ENCODE measurements at regions of chrX and their contacts with region 1.

Region 1: GRCh38 chrX:129905787-129906580 is at the start of gene UTP14A:
- DNase-seq: peak; percentile 94
- ATAC-seq: peak; percentile 99
- total RNA-seq, gene UTP14A: 6.9 TPM

Region 2: GRCh38 chrX:129600981-129601424 is 305.0 kb before region 1 on chrX:
- intact Hi-C with region 1: loop called (anchors 5 kb)
- DNase-seq: no peak
- ATAC-seq: peak; percentile 26

Region 3: DNA sequence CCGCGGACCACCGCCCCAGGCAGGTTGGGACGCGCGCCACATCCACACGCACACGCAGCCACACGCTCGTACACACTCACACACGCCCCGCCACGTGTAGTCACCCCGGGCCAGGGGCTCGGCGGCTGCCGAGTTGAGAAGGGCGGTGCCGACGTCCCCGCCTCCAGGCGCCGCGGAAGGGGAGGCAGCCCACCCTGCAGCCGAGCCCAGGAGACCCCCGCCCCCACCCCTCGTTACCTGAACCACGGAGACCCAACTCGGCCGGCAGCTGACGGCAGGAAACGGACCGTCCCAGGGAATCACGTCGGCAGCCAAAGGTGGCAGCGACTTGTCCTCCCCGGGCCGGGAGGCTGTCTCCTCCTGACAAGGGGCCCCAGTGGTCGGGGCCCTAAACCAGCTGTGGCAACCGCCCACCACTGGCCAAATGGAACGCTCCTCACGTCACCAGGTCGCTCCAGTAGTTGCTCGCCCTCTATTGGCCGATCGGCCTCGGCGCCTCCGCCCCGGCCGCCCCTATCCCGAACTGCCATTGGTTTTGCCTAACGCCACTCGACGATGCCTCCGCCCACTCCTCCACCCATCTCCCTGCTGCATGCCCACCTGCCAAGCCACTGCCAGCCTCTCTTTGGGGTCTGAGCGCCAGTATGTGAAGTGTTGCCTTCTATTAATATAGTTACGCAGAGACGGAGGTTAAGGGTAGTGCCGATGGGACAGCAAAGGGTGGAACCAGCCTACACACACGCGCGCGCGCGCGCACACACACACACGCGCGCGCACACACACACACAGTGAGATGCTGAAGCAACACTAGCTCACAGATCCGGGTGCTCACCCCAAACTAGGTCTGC is 62.3 kb before region 1 on chrX and contains the start of gene ZDHHC9:
- intact Hi-C with region 1: loop called (anchors 5 kb)
- DNase-seq: peak; percentile 93
- ATAC-seq: peak; percentile 98
- total RNA-seq, gene ZDHHC9: 17.9 TPM

Region 4: DNA sequence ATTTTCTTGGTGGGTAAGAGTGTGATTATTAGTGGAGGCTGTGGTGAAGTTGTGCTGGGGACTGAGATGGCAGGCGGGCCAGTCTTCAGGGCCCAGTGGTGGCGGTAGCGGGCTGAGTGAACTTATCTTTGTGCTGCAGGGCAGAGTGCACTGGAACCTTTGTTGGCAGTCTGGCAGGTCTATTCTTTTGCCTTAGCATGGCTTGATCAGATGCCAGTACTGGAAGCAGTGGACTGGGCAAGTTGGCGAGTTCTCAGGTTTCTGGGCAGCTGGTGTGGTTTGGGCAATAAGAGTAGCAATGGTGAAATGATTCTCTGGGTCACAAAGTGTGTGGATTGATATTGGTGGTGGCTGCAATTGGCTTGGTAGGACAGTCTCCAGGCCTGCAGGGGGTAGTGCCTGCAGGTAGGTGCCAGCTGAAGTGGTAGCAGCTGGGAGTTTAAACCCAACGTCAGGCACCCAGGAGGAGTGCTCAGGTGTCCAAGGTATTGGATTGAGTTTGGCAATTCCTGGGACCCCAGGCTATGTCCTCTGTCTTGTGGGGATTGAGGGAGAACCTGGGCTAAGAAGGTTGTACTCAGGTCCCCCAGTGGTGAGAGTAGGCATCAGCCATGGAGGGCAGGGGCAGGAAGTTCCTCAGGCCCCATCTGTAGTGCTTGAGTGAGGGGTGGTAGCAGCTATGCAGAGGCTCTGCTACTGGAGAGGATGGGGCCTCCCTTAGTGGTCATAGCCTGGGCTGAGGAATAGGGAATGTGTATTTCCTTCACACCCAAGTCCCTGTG is 398.8 kb after region 1 on chrX:
- intact Hi-C with region 1: no loop called
- DNase-seq: no peak
- ATAC-seq: no peak

Measured in Right ventricle myocardium inferior (tissue), 1 donor.